ENCODE measurements at regions of chr17 and their contacts with region 1.

Region 1: DNA sequence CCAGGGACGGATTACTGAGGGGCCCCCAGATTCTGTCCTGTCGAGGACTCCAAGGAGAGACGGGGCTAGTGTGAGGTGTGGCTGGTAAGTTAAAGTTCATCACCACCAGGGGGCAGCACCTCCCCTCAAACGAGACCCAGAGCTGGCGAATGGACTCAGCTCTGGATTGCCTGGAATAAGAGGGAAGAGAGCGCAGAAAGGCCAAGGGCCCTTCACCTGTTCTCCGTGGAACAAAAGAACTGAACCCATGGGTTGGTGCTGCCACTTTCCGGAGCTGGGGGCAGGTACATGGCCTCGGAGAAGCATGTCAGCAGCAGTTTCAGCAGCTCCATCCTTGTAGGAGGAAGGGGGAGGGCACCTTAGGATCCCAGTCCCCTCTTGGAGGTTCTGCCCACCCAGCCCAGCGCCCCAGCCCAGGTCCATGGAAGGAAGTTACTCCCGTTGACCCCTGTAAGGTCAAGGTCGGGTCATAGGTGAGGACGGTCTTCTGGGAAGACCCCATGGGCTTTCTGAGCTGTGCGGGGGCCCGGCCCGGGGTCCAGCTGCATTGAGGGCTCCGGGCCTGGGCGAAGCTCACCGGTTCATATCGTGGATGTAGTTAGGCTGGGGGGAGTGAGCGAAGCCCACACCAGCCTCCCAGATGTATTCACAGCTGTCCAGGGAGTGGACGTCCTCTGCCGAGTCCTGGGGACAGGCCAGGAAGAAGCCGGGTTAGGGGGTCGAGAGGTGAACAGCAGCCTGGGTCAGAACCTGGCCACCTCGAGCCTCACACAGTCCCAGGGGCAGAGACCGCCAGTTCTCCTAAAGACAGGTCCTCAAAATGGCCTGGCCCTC is 10.7 kb downstream of the HID1 start:
- DNase-seq: peak; percentile 88 to 91 (median 89)
- ATAC-seq: peak; percentile 78 to 91 (median 86)
- H3K4me3 ChIP-seq: no peak overlapping the region
- H3K27ac ChIP-seq: no peak overlapping the region
- H3K4me1 ChIP-seq: peaks cover 0 to 6% (median 0%) of the 10 kb centered on the region in 12 donors
- H3K27me3 ChIP-seq: peaks cover 0 to 5% (median 0%) of the 10 kb centered on the region in 9 donors
- CTCF ChIP-seq: peak; percentile 67 to 89 (median 80)
- POLR2A ChIP-seq: no peak

Region 2: DNA sequence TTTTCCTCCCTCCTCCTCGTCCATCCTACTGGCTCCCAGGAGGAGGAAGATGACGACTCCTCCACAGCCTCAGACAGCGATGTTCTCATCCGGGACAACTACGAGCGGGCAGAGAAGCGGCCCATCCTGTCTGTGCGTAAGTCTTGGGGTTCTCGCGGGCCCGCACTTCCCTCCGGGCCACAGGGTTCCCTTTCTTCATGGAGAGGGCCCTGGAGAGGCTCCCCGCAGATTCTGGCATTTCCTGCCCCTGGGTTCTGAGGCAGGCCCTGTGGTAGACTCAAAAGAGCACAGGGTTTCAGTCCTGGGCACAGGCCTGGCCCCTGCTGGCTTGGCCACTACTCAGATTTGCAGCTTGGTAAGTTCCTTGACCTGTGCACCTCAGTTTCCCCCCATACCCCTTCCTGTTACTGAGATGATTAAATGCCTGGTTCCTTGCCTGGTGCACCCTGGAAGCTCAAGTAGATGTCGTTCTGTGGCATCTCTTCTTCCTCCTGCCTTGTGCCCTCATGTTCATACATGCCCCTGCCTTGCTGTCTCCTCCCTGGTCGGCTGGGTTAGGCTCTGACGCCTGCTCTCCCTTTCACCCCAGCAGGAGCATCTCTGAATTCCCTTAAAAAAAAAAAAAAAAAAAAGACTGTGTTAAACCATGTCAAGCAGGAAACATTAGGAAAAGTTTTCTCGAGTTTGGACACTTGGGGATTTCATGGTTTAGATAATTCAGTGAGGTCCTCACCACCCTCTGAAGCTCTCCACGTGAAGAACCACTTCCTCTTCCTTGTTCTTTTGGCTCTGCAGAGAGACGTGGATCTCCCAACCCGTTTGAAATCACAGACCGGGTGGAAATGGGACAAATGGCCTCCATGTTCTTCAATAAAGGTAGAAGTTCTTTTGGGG is 171.5 kb before region 1 on chr17:
- intact Hi-C with region 1: loop called in 6 of 10 experiments (anchors 2 to 10 kb)
- DNase-seq: no peak
- ATAC-seq: no peak
- H3K4me3 ChIP-seq: no peak overlapping the region
- H3K27ac ChIP-seq: peak overlapping the region in 1 of 12 donors; percentile 55
- H3K4me1 ChIP-seq: peaks cover 0 to 23% (median 0%) of the 10 kb centered on the region in 12 donors
- H3K27me3 ChIP-seq: no peaks in the 10 kb centered on the region
- CTCF ChIP-seq: no peak
- POLR2A ChIP-seq: no peak

Region 3: DNA sequence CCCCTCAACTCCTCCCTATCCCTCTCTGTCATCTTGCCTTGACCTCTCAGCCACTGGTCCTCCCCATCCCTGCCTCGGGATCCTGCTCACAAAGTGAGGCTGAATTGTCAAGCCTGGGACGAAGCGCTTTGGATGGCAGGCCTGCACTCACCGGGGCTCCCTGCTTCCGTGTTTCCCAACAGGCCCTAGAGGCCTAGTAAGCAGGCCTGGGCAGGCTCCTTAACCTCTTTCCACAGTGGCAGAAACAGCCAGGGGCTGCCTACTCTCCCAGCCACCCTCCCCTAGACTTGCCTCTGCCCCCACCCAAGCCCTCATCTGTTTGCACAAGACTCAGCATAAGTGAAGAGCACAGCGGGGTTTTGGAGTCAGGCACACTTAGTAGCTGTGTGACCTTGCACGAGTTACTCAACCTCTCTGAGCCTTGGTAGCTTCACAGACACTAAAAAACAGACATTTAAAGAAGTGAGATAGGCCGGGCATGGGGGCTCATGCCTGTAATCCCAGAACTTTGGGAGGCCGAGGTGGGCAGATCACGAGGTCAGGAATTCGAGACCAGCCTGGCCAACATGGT is 63.4 kb before region 1 on chr17:
- intact Hi-C with region 1: no loop called
- DNase-seq: no peak
- ATAC-seq: no peak
- H3K4me3 ChIP-seq: no peak overlapping the region
- H3K27ac ChIP-seq: no peak overlapping the region
- H3K4me1 ChIP-seq: peaks cover 0 to 5% (median 3%) of the 10 kb centered on the region in 12 donors
- H3K27me3 ChIP-seq: peaks cover 7 to 35% (median 21%) of the 10 kb centered on the region in 9 donors
- CTCF ChIP-seq: no peak
- POLR2A ChIP-seq: no peak

Region 4: DNA sequence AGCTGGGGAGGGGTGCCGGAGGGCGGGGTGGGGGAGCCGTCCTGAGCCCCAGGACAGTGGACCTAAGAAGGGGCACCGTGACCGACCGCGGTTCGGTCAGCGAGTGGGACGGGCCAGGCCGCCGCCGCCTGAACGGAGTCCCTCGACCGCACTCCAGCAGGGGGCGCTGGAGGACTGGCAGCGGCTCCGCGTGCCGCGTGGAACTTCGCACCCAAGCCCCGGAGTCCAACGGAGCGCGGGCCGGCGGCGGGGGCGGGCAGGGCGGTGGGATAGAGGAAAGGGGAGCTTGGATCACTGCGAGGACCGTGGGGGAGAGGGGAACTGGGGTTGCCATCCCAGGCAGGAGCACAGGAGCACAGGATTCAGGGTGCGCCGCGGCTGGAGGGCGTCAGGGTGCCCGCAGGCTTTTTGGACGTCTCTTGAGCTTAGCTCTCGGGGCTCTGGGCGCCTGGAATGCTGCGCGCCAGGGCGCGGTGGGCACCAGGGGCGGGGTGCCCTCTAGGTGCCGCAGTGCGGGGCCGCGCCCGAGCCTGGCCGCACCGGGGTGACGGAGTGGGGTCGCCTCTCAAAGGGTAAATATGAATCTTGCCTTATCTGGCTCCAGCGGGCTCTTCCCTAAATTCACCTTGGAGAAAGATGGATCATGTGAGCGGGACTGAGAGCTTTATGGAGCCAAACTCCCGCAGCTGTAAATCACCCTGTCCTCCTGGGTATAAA is 38.2 kb before region 1 on chr17:
- intact Hi-C with region 1: loop called in 2 of 10 experiments (anchors 2 kb)
- DNase-seq: peak; percentile 56 to 89 (median 66)
- ATAC-seq: peak in 3 of 4 donors; percentile 41 to 72 (median 55)
- H3K4me3 ChIP-seq: peak overlapping the region in 11 of 12 donors; percentile 3 to 45 (median 31)
- H3K27ac ChIP-seq: no peak overlapping the region
- H3K4me1 ChIP-seq: peaks cover 0 to 30% (median 17%) of the 10 kb centered on the region in 12 donors
- H3K27me3 ChIP-seq: peaks cover 30 to 91% (median 72%) of the 10 kb centered on the region in 9 donors
- CTCF ChIP-seq: peak; percentile 65 to 86 (median 76)
- POLR2A ChIP-seq: no peak

Region 5: DNA sequence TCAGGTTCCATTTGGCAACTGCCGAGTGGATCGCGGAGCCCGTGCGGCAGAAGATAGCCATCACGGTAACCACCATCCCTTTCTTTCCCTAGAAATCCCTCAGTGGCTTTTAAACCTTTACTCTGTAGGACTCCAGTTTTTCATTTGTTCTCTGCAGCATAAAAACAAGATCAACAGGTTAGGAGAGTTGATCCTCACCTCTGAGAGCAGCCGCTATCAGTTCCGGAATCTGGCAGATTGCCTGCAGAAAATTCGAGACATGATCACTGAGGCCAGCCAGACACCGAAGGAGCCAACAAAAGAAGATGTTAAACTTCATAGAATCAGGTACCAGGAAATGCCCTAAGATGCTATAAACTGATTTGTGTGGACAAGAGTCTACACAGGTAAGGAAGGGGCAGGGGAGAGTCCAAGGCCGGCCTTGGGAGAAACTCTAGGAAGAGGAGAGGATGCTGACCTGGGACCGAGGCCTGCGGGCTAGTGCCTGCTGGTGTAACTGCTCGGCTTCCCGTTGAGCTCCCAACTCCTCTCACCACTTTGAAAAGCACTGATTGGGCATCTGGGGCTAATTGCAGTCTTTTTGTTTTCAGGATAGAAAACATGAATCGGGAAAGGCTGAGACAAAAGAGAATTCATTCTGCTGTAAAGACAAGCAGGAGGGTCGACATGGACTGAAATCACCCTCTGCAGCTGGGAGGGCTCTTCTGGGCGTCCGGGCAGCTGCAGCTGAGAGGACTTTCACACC is 58.6 kb after region 1 on chr17:
- intact Hi-C with region 1: no loop called
- DNase-seq: no peak
- ATAC-seq: no peak
- H3K4me3 ChIP-seq: no peak overlapping the region
- H3K27ac ChIP-seq: no peak overlapping the region
- H3K4me1 ChIP-seq: peaks cover 0 to 4% (median 0%) of the 10 kb centered on the region in 12 donors
- H3K27me3 ChIP-seq: no peaks in the 10 kb centered on the region
- CTCF ChIP-seq: no peak
- POLR2A ChIP-seq: no peak

Region 6: GRCh38 chr17:75034236-75034908 is 72.5 kb after region 1 on chr17:
- intact Hi-C with region 1: loop called in 5 of 10 experiments (anchors 5 kb)
- DNase-seq: peak; percentile 84 to 90 (median 88)
- ATAC-seq: peak; percentile 69 to 79 (median 75)
- H3K4me3 ChIP-seq: peak overlapping the region; percentile 47 to 83 (median 68)
- H3K27ac ChIP-seq: peak overlapping the region; percentile 69 to 96 (median 86)
- H3K4me1 ChIP-seq: peaks cover 0 to 50% (median 31%) of the 10 kb centered on the region in 12 donors
- H3K27me3 ChIP-seq: no peaks in the 10 kb centered on the region
- CTCF ChIP-seq: peak in 2 of 12 donors; percentile 6 to 15
- POLR2A ChIP-seq: no peak

Region 7: DNA sequence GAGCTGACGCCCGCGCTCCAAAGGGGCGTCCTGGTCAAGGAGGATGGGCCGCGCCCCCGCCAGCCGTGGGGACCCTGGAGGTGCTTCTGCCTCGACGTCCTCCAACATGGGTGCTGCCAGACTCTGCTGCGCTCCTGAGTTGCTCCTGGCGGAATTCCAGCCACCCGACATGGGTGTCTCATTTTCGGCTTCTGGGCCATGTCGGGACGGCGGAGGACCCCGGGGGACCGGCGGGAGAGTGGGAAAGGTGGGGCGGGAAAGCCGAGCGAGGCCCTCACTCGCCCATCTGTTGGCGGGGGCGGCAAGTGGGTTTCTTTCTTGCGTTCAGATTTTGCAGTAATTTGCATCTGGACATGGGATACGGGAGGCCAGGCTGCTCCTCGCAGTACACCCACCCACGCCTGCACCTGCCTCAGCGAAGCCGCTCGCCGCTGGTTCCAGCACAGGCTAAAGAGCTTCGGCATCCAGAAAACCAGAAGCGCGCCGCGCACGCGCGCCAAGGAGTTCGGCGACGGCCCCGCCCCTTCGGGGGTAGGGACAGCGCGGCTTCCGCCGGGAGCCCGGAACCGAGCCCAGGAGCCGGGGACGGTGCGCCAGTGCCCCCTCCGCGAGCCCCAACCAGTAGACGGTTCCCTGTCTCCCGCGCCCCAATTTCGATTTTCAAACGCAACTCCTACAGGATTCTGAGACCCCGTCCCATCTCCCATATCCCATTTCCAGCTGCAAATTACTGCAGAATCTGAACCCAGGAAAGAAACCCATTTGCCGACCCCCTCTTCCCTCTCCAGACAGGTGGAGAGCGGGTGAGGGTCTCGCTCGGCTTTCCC is 147.7 kb after region 1 on chr17 and contains the start of gene ARMC7:
- intact Hi-C with region 1: loop called in 3 of 10 experiments (anchors 1 to 5 kb)
- DNase-seq: peak; percentile 90 to 97 (median 92)
- ATAC-seq: peak; percentile 80 to 92 (median 90)
- H3K4me3 ChIP-seq: peak within 1 kb of the TSS; percentile 78 to 98 (median 92)
- H3K27ac ChIP-seq: peak within 1 kb of the TSS in 11 of 12 donors; percentile 66 to 91 (median 81)
- H3K4me1 ChIP-seq: peaks cover 0 to 44% (median 28%) of the 10 kb centered on the region in 12 donors
- H3K27me3 ChIP-seq: no peaks in the 10 kb centered on the region
- CTCF ChIP-seq: peak in 2 of 12 donors; percentile 6 to 21
- POLR2A ChIP-seq: peak in 1 of 2 donors; percentile 88
- total RNA-seq, gene ARMC7: 3.9 to 7.9 (median 5.2) TPM

Region 8: GRCh38 chr17:75194879-75195278 is 233.0 kb after region 1 on chr17:
- intact Hi-C with region 1: loop called in 7 of 10 experiments (anchors 2 to 5 kb)
- DNase-seq: no peak
- ATAC-seq: no peak
- H3K4me3 ChIP-seq: no peak overlapping the region
- H3K27ac ChIP-seq: no peak overlapping the region
- H3K4me1 ChIP-seq: no peaks in the 10 kb centered on the region
- H3K27me3 ChIP-seq: no peaks in the 10 kb centered on the region
- CTCF ChIP-seq: no peak
- POLR2A ChIP-seq: no peak

Region 9: DNA sequence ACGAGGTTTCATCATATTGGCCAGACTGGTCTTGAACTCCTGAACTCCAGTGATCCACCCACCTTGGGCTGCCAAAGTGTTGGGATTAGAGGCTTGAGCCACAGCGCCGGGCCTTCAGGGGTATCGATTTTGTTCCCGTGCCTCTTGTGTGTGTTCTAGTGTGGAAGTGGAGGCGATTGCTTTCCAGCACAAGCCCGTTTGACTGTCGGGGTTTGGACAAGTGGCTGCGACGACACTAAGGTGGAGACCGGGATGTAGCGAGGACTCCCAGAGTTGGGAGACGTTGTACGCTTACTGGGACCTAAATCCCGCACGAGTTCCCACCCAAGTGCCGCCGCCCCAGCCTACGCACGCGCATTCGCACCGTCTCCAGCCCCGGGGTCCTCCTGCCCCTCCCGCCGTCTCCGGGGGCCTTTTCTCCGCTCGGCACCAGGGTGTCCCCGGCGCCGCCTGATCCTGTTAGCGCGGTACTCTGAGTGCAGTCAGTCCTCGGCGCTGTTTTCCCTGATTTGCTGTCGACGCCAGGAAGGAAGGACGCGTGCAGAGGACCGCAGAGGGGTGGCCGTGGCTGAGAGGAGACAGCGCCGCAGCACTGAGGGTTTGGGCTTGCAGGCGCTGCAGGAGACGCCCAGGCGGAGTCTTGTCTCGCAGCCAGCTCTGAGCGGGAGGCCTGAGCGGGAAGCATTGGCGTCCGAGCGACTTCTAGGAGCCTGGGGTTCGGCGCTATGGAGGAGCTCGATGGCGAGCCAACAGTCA is 243.3 kb after region 1 on chr17 and contains the start of gene NUP85:
- intact Hi-C with region 1: loop called in 8 of 10 experiments (anchors 1 to 5 kb)
- DNase-seq: peak; percentile 95 to 97 (median 96)
- ATAC-seq: peak; percentile 94 to 98 (median 98)
- H3K4me3 ChIP-seq: peak within 1 kb of the TSS; percentile 63 to 99 (median 88)
- H3K27ac ChIP-seq: peak within 1 kb of the TSS; percentile 83 to 99 (median 96)
- H3K4me1 ChIP-seq: peaks cover 0 to 29% (median 19%) of the 10 kb centered on the region in 12 donors
- H3K27me3 ChIP-seq: no peaks in the 10 kb centered on the region
- CTCF ChIP-seq: no peak
- POLR2A ChIP-seq: peak in 1 of 2 donors; percentile 67
- total RNA-seq, gene NUP85: 9.4 to 40.9 (median 21.5) TPM